B cell (primary cell): ENCODE measurements at regions of chr6 and their contacts with region 1.

Region 1: GRCh38 chr6:46221222-46221793 is 50.5 kb upstream of the ENPP5 start:
- DNase-seq: peak; percentile 68
- ATAC-seq: peak; percentile 53
- H3K4me3 ChIP-seq: no peak overlapping the region
- H3K4me3 Mint-ChIP-seq: no peak overlapping the region
- H3K27ac ChIP-seq: peak overlapping the region in 1 of 2 donors; percentile 43
- H3K27ac Mint-ChIP-seq: peak overlapping the region; percentile 93
- H3K4me1 ChIP-seq: peaks cover 23 to 33% of the 10 kb centered on the region in 2 donors
- H3K4me1 Mint-ChIP-seq: peaks cover 46% of the 10 kb centered on the region
- H3K27me3 ChIP-seq: no peaks in the 10 kb centered on the region
- H3K27me3 Mint-ChIP-seq: no peaks in the 10 kb centered on the region
- CTCF ChIP-seq: peak; percentile 87

Region 2: GRCh38 chr6:45377554-45378333 is 843.6 kb before region 1 on chr6 and contains the start of gene SUPT3H:
- CTCF ChIA-PET with region 1: no interaction called
- POLR2A ChIA-PET with region 1: no interaction called
- intact Hi-C with region 1: loop called (anchors 5 kb)
- DNase-seq: peak; percentile 95
- ATAC-seq: peak; percentile 77
- H3K4me3 ChIP-seq: peak within 1 kb of the TSS; percentile 76 to 98 (median 93)
- H3K4me3 Mint-ChIP-seq: peak within 1 kb of the TSS; percentile 98
- H3K27ac ChIP-seq: peak within 1 kb of the TSS; percentile 97
- H3K27ac Mint-ChIP-seq: peak within 1 kb of the TSS; percentile 97
- H3K4me1 ChIP-seq: peaks cover 9 to 12% of the 10 kb centered on the region in 2 donors
- H3K4me1 Mint-ChIP-seq: peaks cover 28% of the 10 kb centered on the region
- H3K27me3 ChIP-seq: no peaks in the 10 kb centered on the region
- H3K27me3 Mint-ChIP-seq: no peaks in the 10 kb centered on the region
- CTCF ChIP-seq: no peak
- total RNA-seq, gene SUPT3H: 12.4 and 14.1 TPM in 2 replicates

Region 3: DNA sequence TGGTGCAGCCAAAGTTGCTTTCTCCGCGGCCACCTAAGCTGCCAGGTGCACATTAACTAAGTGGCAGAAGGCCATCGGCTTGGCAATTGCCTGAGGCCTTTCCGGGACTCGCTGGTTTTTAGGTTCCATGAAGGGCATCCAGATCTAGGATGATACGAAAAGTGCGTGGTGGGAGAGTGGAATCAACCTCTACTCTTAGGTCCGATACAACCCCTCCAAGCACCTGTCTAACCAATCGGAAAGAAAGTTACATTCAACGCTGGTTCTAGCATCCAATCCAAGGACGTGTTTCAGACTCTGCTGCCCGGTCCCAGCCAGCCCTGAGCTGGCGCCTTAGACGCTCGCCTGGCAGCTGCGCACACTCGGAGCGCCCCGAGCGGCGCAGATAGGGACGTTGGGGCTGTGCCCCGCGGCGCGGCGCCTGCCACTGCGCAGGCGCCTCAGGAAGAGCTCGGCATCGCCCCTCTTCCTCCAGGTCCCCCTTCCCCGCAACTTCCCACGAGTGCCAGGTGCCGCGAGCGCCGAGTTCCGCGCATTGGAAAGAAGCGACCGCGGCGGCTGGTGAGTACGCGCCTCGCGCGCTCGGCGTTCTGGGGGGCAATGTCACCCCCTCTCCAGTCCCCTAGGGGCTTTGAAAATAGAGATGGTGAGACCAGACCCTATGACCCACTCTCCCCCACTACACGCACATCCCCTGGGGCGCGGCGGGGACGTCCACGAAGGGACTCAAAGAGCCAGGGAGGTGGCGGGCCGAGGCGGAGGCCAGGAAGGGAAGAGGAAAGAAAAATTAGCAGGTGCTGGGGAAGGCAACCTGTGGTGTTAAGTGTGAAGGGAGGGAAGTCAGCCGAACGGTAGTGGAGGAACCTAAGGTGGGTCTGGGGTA is 91.4 kb before region 1 on chr6 and contains the start of gene ENPP4:
- CTCF ChIA-PET with region 1: interaction called, 20 read pairs
- POLR2A ChIA-PET with region 1: no interaction called
- intact Hi-C with region 1: loop called (anchors 1 kb)
- DNase-seq: peak; percentile 98
- ATAC-seq: peak; percentile 99
- H3K4me3 ChIP-seq: peak within 1 kb of the TSS; percentile 73 to 96 (median 80)
- H3K4me3 Mint-ChIP-seq: peak within 1 kb of the TSS; percentile 99
- H3K27ac ChIP-seq: peak within 1 kb of the TSS; percentile 72 to 78
- H3K27ac Mint-ChIP-seq: peak within 1 kb of the TSS; percentile 97
- H3K4me1 ChIP-seq: peaks cover 23 to 26% of the 10 kb centered on the region in 2 donors
- H3K4me1 Mint-ChIP-seq: peaks cover 45% of the 10 kb centered on the region
- H3K27me3 ChIP-seq: no peaks in the 10 kb centered on the region
- H3K27me3 Mint-ChIP-seq: no peaks in the 10 kb centered on the region
- CTCF ChIP-seq: no peak
- total RNA-seq, gene ENPP4: 10.0 and 10.1 TPM in 2 replicates

Region 4: DNA sequence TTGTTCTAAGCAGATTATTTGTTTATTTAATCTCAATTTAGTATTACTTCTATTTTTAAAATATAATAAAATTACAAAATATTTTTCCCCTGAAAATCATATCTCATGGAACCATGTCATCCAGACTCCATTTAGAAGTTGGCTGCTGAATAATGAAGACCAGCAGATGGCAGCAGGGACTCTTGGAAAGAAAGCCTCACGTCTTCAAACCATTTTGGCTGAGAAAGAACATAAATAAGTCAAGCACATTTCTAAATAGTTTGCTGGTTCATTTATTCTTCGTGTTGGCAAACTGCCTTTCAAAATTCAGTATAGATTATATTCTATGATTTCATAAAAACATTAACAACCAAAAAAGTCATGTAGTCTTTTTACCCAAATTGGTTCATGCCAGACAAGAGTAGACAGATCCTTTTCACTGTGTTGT is 198.3 kb after region 1 on chr6:
- CTCF ChIA-PET with region 1: interaction called, 216 read pairs
- POLR2A ChIA-PET with region 1: no interaction called
- intact Hi-C with region 1: no loop called
- DNase-seq: peak; percentile 40
- ATAC-seq: no peak
- H3K4me3 ChIP-seq: no peak overlapping the region
- H3K4me3 Mint-ChIP-seq: no peak overlapping the region
- H3K27ac ChIP-seq: no peak overlapping the region
- H3K27ac Mint-ChIP-seq: no peak overlapping the region
- H3K4me1 ChIP-seq: no peaks in the 10 kb centered on the region
- H3K4me1 Mint-ChIP-seq: no peaks in the 10 kb centered on the region
- H3K27me3 ChIP-seq: no peaks in the 10 kb centered on the region
- H3K27me3 Mint-ChIP-seq: peaks cover 7% of the 10 kb centered on the region
- CTCF ChIP-seq: peak; percentile 69

Region 5: DNA sequence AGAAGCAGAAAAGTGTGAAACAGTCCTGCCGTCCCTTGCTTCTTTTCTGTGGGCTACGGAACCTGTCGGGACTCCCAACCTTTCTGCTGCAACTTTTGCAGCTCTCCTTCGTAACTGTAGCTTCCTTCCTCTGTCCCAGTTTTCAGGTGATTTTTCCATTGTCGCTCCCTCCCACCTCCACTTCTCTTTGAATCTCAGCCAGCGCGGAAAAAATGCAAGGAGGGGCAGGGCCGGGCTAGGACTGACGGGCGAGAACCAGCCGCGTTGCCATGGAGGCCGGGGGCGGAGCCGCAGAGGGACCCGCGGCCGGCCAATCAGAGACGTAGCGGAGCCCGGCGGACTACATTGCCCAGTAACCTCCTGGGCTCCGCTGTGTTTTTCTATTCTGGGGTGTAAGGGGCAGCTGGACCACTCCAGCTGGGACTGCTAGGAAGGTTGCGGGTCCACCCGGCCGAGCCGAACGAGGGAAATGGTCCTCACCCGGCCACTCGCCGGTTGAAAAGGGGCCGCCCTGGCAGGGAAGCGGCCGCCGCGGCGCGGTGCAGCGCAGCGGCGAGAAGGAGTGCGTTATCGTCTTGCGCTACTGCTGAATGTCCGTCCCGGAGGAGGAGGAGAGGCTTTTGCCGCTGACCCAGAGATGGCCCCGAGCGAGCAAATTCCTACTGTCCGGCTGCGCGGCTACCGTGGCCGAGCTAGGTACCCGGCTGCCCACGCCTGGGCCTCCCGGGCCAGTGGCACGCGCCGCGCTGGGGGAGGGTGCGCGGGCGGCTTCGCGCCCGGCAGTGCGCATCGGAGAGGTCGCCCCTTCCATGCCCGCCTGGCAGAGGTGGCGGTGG is 431.5 kb after region 1 on chr6 and contains the starts of genes CYP39A1 and SLC25A27:
- CTCF ChIA-PET with region 1: no interaction called
- POLR2A ChIA-PET with region 1: no interaction called
- intact Hi-C with region 1: loop called (anchors 1 kb)
- DNase-seq: peak; percentile 84
- ATAC-seq: peak; percentile 100
- H3K4me3 ChIP-seq: peak within 1 kb of the TSS; percentile 55 to 82 (median 77)
- H3K4me3 Mint-ChIP-seq: peak within 1 kb of the TSS; percentile 95
- H3K27ac ChIP-seq: no peak within 1 kb of the TSS
- H3K27ac Mint-ChIP-seq: peak within 1 kb of the TSS; percentile 22
- H3K4me1 ChIP-seq: peaks cover 11 to 12% of the 10 kb centered on the region in 2 donors
- H3K4me1 Mint-ChIP-seq: peaks cover 16% of the 10 kb centered on the region
- H3K27me3 ChIP-seq: peaks cover 0 to 23% (median 13%) of the 10 kb centered on the region in 4 experiments
- H3K27me3 Mint-ChIP-seq: peaks cover 54% of the 10 kb centered on the region
- CTCF ChIP-seq: no peak
- total RNA-seq, gene CYP39A1: not detected in 2 replicates
- total RNA-seq, gene SLC25A27: 1.9 and 3.8 TPM in 2 replicates

Region 6: DNA sequence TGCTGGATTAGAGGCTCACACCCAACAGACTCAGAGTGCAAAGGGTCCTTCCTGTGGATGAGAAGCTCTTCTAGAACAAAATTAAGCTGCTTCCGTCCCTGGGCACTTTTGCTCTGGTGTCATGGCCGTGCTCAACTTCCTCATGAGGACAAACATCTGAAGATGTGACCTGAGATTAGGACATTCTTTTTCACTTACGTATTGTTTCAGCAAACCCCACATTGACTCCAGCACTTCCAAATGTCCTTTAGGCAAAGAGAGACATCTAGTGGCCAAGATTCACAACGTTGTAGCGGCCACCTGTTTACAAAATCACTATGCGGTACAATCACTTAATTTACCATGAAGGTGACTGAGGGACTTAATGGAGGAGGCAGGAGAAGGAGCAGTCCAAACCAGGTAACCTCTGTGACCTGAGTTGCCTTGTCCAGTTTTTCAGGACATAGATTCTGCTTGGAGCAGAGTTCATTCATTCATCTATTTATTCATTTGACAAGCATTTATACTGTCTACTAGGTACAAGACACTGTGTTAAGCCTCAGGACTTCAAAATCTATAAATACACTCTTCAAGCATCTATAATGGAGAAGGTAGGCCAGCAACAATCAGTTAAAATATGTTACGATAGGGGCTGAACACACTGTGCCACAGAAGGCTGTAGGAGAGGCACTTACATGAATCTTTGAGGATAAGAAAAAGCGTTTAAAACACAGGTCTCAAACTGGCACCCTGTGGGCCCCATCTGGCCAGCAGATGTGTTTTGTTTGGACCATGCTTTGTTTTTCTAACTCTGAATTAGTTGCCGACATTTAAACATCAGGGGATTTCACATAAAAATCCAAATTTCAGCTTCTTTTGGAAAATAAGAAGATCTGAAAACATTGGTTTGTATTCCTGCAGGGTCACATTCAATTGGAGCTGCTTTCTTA is 826.4 kb after region 1 on chr6:
- CTCF ChIA-PET with region 1: no interaction called
- POLR2A ChIA-PET with region 1: no interaction called
- intact Hi-C with region 1: loop called (anchors 2 kb)
- DNase-seq: peak; percentile 35
- ATAC-seq: peak; percentile 17
- H3K4me3 ChIP-seq: no peak overlapping the region
- H3K4me3 Mint-ChIP-seq: no peak overlapping the region
- H3K27ac ChIP-seq: no peak overlapping the region
- H3K27ac Mint-ChIP-seq: no peak overlapping the region
- H3K4me1 ChIP-seq: no peaks in the 10 kb centered on the region
- H3K4me1 Mint-ChIP-seq: peaks cover 2% of the 10 kb centered on the region
- H3K27me3 ChIP-seq: no peaks in the 10 kb centered on the region
- H3K27me3 Mint-ChIP-seq: peaks cover 11% of the 10 kb centered on the region
- CTCF ChIP-seq: peak; percentile 65